SK-N-SH (cell line): ENCODE measurements at regions of chr17 and their contacts with region 1.

Region 1: GRCh38 chr17:74776044-74776977 is at the start of gene NAT9:
- DNase-seq: peak; percentile 100
- H3K4me3 ChIP-seq: peak within 1 kb of the TSS; percentile 87 to 90
- H3K27ac ChIP-seq: peak within 1 kb of the TSS; percentile 72 to 81
- H3K4me1 ChIP-seq: peaks cover 13 to 16% of the 10 kb centered on the region in 2 experiments; a peak in 3 of 4 replicates
- H3K27me3 ChIP-seq: no peaks in the 10 kb centered on the region
- CTCF ChIP-seq: no peak
- EP300 ChIP-seq: no peak
- RAD21 ChIP-seq: no peak
- polyA plus RNA-seq, gene NAT9: 117 and 190 TPM in 2 replicates

Region 2: GRCh38 chr17:74759243-74759801 is 17.0 kb before region 1 on chr17:
- CTCF ChIA-PET with region 1: interaction called, 1,361 read pairs
- POLR2A ChIA-PET with region 1: interaction called, 17 read pairs
- DNase-seq: peak; percentile 38
- H3K4me3 ChIP-seq: no peak overlapping the region
- H3K27ac ChIP-seq: peak overlapping the region in 1 of 2 experiments; percentile 94; a peak in 2 of 4 replicates
- H3K4me1 ChIP-seq: peaks cover 45 to 68% of the 10 kb centered on the region in 2 experiments; a peak in 3 of 4 replicates
- H3K27me3 ChIP-seq: no peaks in the 10 kb centered on the region
- CTCF ChIP-seq: no peak
- EP300 ChIP-seq: no peak
- RAD21 ChIP-seq: no peak

Region 3: DNA sequence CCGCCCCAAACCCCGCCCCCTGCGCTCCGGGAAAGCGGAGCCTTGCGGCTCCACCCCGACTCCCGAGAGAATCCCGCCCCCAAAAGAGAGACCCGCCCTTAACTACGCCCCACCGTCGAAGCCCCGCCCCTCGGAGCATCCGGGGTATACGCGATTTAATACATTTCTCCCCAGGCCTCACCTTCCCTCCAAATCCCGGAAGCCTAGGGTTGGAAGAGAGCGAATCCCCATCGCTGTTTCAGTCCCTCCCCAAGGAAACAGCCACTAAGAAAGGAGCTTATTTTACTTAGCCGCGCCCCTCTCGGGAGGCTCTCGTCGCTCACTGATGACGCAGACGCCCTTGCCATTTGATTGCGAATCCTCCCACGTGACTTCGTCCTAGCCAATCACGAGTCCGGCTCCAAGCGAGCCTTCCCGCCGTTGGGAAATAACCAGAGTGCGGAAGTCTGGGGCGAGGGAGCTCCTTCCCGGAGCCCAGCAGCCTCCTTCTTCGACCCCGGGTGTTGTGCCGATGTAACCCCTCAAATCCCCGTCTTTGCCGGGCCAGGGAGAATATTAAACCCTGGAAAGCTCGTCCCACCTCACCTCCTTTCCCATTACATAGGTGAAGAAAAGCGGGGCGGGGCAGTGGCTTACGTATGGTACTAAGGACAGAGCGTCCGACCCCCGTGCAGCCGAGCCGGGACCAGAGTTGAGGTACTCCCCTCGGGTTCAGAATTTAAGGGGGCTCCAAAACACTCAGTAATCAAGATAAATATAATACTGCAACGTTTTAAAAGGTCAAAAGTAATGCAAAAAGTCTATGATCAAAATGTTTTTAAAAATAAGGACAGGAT is 96.9 kb after region 1 on chr17:
- CTCF ChIA-PET with region 1: interaction called, 3,869 read pairs
- POLR2A ChIA-PET with region 1: interaction called, 8 read pairs
- DNase-seq: peak; percentile 100
- H3K4me3 ChIP-seq: peak overlapping the region; percentile 69 to 88
- H3K27ac ChIP-seq: peak overlapping the region; percentile 60 to 81
- H3K4me1 ChIP-seq: peaks cover 12 to 19% of the 10 kb centered on the region in 2 experiments; a peak in 3 of 4 replicates
- H3K27me3 ChIP-seq: no peaks in the 10 kb centered on the region
- CTCF ChIP-seq: no peak
- EP300 ChIP-seq: no peak
- RAD21 ChIP-seq: no peak